B cell (primary cell): ENCODE measurements at regions of chr1 and their contacts with region 1.

Region 1: GRCh38 chr1:229558571-229559335 is at the start of gene ABCB10:
- DNase-seq: peak; percentile 95
- ATAC-seq: peak; percentile 82
- H3K4me3 ChIP-seq: peak within 1 kb of the TSS; percentile 65 to 85 (median 69)
- H3K4me3 Mint-ChIP-seq: peak within 1 kb of the TSS; percentile 96
- H3K27ac ChIP-seq: peak within 1 kb of the TSS; percentile 43 to 68
- H3K27ac Mint-ChIP-seq: peak within 1 kb of the TSS; percentile 90
- H3K4me1 ChIP-seq: peaks cover 16 to 18% of the 10 kb centered on the region in 2 donors
- H3K4me1 Mint-ChIP-seq: peaks cover 32% of the 10 kb centered on the region
- H3K27me3 ChIP-seq: no peaks in the 10 kb centered on the region
- H3K27me3 Mint-ChIP-seq: no peaks in the 10 kb centered on the region
- CTCF ChIP-seq: peak; percentile 60
- total RNA-seq, gene ABCB10: 17.0 and 18.6 TPM in 2 replicates

Region 2: DNA sequence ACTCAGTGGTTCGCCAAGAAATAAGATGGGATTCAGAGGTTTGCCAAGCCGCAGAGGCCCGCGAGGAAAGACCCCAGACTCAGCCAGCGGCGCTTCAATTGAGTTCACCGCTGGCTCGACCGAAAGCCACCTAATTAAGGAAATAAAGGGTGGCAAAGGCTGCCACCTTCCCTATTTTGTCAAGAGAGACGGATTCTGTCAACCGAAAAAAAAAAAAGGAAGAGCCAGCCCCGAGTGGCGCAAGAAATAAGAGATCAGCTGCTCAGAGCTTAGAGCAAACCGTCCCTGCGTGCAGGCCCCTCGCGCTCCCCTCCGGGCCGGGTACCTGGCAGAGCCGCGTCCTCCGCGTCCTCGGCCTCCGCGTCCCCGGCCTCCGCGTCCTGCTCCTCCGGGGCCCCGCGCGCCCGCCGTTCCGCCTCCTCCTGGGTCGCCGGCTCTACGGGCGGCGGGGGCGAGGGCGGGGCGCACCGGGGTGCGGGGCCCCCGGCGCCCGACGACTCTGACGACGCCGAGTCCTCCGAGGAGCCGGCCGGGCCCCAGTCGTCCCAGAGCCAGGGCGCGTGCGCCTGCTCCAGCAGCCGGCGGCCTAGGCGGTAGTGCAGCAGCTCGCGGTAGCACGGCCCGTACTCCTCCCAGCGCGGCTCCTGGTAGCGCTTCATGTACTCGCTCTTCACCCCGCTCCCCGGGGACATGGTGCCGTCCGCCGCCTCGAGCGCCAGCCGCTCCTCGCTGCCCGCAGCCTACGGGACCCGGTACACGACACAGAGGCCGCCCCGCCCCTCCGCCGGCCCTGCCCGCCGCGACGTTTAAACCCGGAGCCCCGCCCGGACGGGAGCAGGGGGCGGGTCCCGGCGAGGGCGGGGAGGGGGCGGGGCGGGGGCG is 216.7 kb before region 1 on chr1:
- CTCF ChIA-PET with region 1: no interaction called
- POLR2A ChIA-PET with region 1: no interaction called
- intact Hi-C with region 1: loop called (anchors 5 kb)
- DNase-seq: peak; percentile 91
- ATAC-seq: peak; percentile 82
- H3K4me3 ChIP-seq: peak overlapping the region; percentile 66 to 86 (median 80)
- H3K4me3 Mint-ChIP-seq: peak overlapping the region; percentile 88
- H3K27ac ChIP-seq: peak overlapping the region; percentile 24 to 79
- H3K27ac Mint-ChIP-seq: peak overlapping the region; percentile 90
- H3K4me1 ChIP-seq: peaks cover 21 to 23% of the 10 kb centered on the region in 2 donors
- H3K4me1 Mint-ChIP-seq: peaks cover 42% of the 10 kb centered on the region
- H3K27me3 ChIP-seq: peaks cover 0 to 12% (median 3%) of the 10 kb centered on the region in 4 experiments
- H3K27me3 Mint-ChIP-seq: peaks cover 20% of the 10 kb centered on the region
- CTCF ChIP-seq: no peak

Region 3: GRCh38 chr1:229625915-229626831 is 67.4 kb after region 1 on chr1 and contains the starts of genes TAF5L and URB2:
- CTCF ChIA-PET with region 1: interaction called, 38 read pairs
- POLR2A ChIA-PET with region 1: interaction called, 22 read pairs
- intact Hi-C with region 1: loop called (anchors 1 kb)
- DNase-seq: peak; percentile 90
- ATAC-seq: peak; percentile 92
- H3K4me3 ChIP-seq: peak within 1 kb of the TSS; percentile 74 to 91 (median 86)
- H3K4me3 Mint-ChIP-seq: peak within 1 kb of the TSS; percentile 98
- H3K27ac ChIP-seq: peak within 1 kb of the TSS; percentile 58 to 82
- H3K27ac Mint-ChIP-seq: peak within 1 kb of the TSS; percentile 93
- H3K4me1 ChIP-seq: peaks cover 25 to 28% of the 10 kb centered on the region in 2 donors
- H3K4me1 Mint-ChIP-seq: peaks cover 48% of the 10 kb centered on the region
- H3K27me3 ChIP-seq: no peaks in the 10 kb centered on the region
- H3K27me3 Mint-ChIP-seq: no peaks in the 10 kb centered on the region
- CTCF ChIP-seq: no peak
- total RNA-seq, gene TAF5L: 21.2 and 24.0 TPM in 2 replicates
- total RNA-seq, gene URB2: 9.6 and 11.2 TPM in 2 replicates

Region 4: GRCh38 chr1:230149751-230150584 is 591.2 kb after region 1 on chr1:
- CTCF ChIA-PET with region 1: no interaction called
- POLR2A ChIA-PET with region 1: no interaction called
- intact Hi-C with region 1: loop called (anchors 2 kb)
- DNase-seq: peak; percentile 78
- ATAC-seq: peak; percentile 77
- H3K4me3 ChIP-seq: peak overlapping the region; percentile 8 to 64 (median 51)
- H3K4me3 Mint-ChIP-seq: peak overlapping the region; percentile 73
- H3K27ac ChIP-seq: peak overlapping the region; percentile 76 to 94
- H3K27ac Mint-ChIP-seq: peak overlapping the region; percentile 98
- H3K4me1 ChIP-seq: peaks cover 61 to 63% of the 10 kb centered on the region in 2 donors
- H3K4me1 Mint-ChIP-seq: peaks cover 71% of the 10 kb centered on the region
- H3K27me3 ChIP-seq: no peaks in the 10 kb centered on the region
- H3K27me3 Mint-ChIP-seq: no peaks in the 10 kb centered on the region
- CTCF ChIP-seq: no peak